K562 (cell line): ENCODE measurements at regions of chr16 and their contacts with region 1.

Region 1: DNA sequence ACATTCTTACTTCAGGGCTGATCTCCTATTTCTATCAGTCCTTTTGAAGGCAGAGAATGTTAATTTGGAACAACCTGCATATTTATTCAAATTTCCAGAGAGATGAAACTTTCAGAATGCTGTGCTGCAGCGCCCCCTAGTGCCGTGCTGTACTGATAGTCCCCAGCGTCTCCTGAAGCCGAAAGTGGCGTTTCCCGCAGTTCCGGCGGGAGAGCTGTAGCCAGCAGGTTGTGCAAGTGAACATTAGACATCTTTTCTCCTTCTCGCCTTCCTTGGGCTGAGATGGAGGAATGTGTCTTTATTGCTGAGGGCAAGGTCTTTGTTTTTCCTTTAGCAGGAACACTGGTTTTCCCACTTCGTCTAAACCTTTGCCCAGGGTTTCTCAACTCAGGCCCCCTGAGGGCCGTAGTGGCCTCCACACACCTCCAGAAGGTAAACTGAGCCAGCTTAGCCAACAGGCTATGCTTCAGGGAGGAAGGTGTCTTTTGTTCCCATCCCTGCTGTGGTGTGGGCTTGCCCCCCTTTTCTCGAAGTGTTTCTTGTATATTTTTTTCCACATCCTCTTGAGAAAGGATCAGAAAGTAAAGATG is 26.4 kb downstream of the USP10 start:
- DNase-seq: peak; percentile 67 to 94 (median 72)
- ATAC-seq: peak; percentile 80
- H3K4me3 ChIP-seq: no peak overlapping the region
- H3K27ac ChIP-seq: no peak overlapping the region; the same call in 2 of the 3 replicates
- H3K4me1 ChIP-seq: peaks cover 15 to 56% of the 10 kb centered on the region in 2 experiments
- H3K27me3 ChIP-seq: no peaks in the 10 kb centered on the region
- CTCF ChIP-seq: peak; percentile 94 to 99 (median 98)
- EP300 ChIP-seq: 0 out of 2 replicates have a peak, but pooled peaks have one; percentile 5
- POLR2A ChIP-seq: no peak
- RAD21 ChIP-seq: peak in 1 of 2 experiments; percentile 92; a peak in 2 of 4 replicates

Region 2: GRCh38 chr16:84511180-84511824 is 214.9 kb before region 1 on chr16:
- CTCF ChIA-PET with region 1: interaction called, 12 read pairs
- POLR2A ChIA-PET with region 1: no interaction called
- in situ Hi-C with region 1: loop called (anchors 5 kb)
- intact Hi-C with region 1: loop called (anchors 2 kb)
- DNase-seq: peak; percentile 76 to 88 (median 80)
- ATAC-seq: peak; percentile 88
- H3K4me3 ChIP-seq: no peak overlapping the region
- H3K27ac ChIP-seq: no peak overlapping the region
- H3K4me1 ChIP-seq: peaks cover 7 to 16% of the 10 kb centered on the region in 2 experiments; a peak in 4 of 5 replicates
- H3K27me3 ChIP-seq: peaks cover 0 to 7% of the 10 kb centered on the region in 2 experiments; a peak in 1 of 5 replicates
- CTCF ChIP-seq: peak; percentile 89 to 99 (median 93)
- EP300 ChIP-seq: no peak
- POLR2A ChIP-seq: no peak
- RAD21 ChIP-seq: peak; percentile 97 to 99

Region 3: DNA sequence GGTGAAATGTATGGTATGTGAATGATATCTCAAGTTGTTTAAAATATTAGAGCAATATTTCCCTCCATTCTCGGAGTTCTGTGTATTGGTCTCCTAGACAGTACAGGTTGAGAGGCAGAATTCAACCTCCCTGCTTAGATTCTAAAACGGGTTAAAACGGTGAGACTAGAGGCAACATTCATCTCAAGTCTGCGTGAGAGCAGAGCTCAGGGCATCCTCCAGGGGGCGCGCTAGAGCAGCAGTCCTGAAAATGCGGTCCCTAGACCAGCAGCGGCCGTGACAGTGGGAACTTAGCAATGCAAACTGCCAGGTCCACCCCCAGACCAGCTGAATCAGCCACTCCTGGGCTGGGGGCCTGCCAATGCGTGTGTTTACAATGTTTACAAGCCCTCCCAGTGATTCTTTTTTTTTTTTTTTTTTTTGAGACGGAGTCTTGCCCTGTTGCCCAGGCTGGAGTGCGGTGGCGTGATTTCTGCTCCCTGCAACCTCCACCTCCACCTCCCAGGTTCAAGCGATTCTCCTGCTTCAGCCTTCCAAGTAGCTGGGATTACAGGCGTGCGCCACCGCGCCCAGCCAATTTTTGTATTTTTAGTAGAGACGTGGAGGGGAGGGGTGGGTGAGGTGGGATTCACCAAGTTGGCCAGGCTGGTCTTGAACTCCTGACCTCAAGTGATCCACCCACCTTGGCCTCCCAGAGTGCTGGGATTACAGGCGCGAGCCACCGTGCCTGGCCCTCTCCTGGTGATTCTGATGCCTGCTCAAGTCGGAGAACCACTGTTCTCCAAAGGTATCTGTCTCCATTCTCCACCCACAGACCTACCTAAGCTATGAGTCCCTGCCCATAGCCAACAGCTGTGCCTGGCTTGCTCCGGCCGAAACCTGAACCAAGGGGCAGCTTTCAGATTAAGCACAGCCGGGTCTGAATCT is 53.6 kb before region 1 on chr16:
- CTCF ChIA-PET with region 1: interaction called, 56 read pairs
- POLR2A ChIA-PET with region 1: interaction called, 3 read pairs
- in situ Hi-C with region 1: no loop called
- intact Hi-C with region 1: loop called (anchors 1 kb)
- DNase-seq: peak; percentile 87 to 91 (median 89)
- ATAC-seq: peak; percentile 95
- H3K4me3 ChIP-seq: no peak overlapping the region
- H3K27ac ChIP-seq: no peak overlapping the region
- H3K4me1 ChIP-seq: peaks cover 10 to 15% of the 10 kb centered on the region in 2 experiments; a peak in 4 of 5 replicates
- H3K27me3 ChIP-seq: peaks cover 0 to 15% of the 10 kb centered on the region in 2 experiments; a peak in 3 of 5 replicates
- CTCF ChIP-seq: peak; percentile 93 to 97 (median 97)
- EP300 ChIP-seq: no peak
- POLR2A ChIP-seq: no peak
- RAD21 ChIP-seq: peak; percentile 81 to 93

Region 4: GRCh38 chr16:84699712-84700445 is 26.3 kb before region 1 on chr16 and contains the start of gene USP10:
- CTCF ChIA-PET with region 1: no interaction called
- POLR2A ChIA-PET with region 1: interaction called, 14 read pairs
- in situ Hi-C with region 1: no loop called
- intact Hi-C with region 1: loop called (anchors 2 kb)
- DNase-seq: peak; percentile 91 to 100 (median 100)
- ATAC-seq: peak; percentile 80
- H3K4me3 ChIP-seq: peak within 1 kb of the TSS; percentile 99
- H3K27ac ChIP-seq: peak within 1 kb of the TSS; percentile 90
- H3K4me1 ChIP-seq: peaks cover 31 to 32% of the 10 kb centered on the region in 2 experiments
- H3K27me3 ChIP-seq: no peaks in the 10 kb centered on the region
- CTCF ChIP-seq: no peak
- EP300 ChIP-seq: no peak
- POLR2A ChIP-seq: peak; percentile 68
- RAD21 ChIP-seq: no peak
- polyA plus RNA-seq, gene USP10: 61.7 to 61.9 TPM

Region 5: DNA sequence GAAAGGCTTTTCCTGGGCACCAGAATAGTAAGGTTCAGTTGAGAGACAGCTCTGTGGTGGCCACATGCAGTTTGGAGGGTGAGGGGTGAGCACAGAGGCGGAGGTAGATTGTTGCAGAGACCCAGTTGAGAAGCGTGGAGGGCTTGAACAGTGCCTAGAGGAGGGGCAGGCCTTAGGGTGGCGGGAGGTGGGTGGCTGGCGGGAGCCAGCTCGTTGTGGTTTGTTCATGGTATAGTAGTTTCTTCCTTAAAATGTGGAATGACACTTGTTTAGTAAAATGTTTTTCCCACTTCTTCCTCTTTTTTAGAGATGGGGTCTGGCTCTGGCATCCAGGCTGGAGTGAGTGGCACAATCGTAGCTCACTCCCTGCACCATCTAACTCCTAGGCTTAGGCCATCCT is 12.1 kb before region 1 on chr16:
- CTCF ChIA-PET with region 1: no interaction called
- POLR2A ChIA-PET with region 1: interaction called, 68 read pairs
- in situ Hi-C with region 1: no loop called
- intact Hi-C with region 1: no loop called
- DNase-seq: no peak
- ATAC-seq: no peak
- H3K4me3 ChIP-seq: no peak overlapping the region
- H3K27ac ChIP-seq: no peak overlapping the region
- H3K4me1 ChIP-seq: peaks cover 11 to 18% of the 10 kb centered on the region in 2 experiments; a peak in 4 of 5 replicates
- H3K27me3 ChIP-seq: no peaks in the 10 kb centered on the region
- CTCF ChIP-seq: no peak
- EP300 ChIP-seq: no peak
- POLR2A ChIP-seq: no peak
- RAD21 ChIP-seq: no peak